Activated CD4-positive, alpha-beta T cell treated with anti-CD3 and anti-CD28 coated beads, Interleukin-2, amount 10 ng/mL, durations not matched to agents 24 days and 14 days (primary cell): ENCODE measurements at regions of chr6 and their contacts with region 1.

Region 1: GRCh38 chr6:143695130-143695968 is 17.6 kb downstream of the PHACTR2 start:
- DNase-seq: no peak
- H3K4me3 Mint-ChIP-seq: no peak overlapping the region
- H3K27ac Mint-ChIP-seq: no peak overlapping the region
- H3K4me1 Mint-ChIP-seq: peaks cover 31% of the 10 kb centered on the region
- H3K27me3 Mint-ChIP-seq: no peaks in the 10 kb centered on the region

Region 2: DNA sequence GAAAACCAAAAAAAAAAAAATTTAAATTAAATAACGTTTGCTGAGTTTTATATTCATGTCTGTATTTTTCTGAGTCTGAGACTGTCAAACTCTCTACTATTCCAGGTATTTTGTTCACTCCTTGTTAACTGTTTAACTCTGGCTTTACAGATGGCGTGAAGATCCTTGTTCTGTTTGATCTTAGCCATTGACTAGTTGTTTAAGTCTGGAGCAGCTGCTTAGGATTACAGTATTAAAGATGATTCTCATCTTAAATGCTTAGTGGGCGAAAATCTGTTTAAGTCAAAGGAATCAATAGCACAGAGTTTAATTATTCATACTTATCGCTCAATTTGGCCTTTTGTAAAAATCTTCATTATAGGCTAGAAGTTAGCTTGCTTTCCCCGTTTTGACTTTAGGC is 15.2 kb before region 1 on chr6:
- intact Hi-C with region 1: no loop called
- DNase-seq: no peak
- H3K4me3 Mint-ChIP-seq: no peak overlapping the region
- H3K27ac Mint-ChIP-seq: no peak overlapping the region
- H3K4me1 Mint-ChIP-seq: peaks cover 17% of the 10 kb centered on the region
- H3K27me3 Mint-ChIP-seq: peaks cover 37% of the 10 kb centered on the region

Region 3: DNA sequence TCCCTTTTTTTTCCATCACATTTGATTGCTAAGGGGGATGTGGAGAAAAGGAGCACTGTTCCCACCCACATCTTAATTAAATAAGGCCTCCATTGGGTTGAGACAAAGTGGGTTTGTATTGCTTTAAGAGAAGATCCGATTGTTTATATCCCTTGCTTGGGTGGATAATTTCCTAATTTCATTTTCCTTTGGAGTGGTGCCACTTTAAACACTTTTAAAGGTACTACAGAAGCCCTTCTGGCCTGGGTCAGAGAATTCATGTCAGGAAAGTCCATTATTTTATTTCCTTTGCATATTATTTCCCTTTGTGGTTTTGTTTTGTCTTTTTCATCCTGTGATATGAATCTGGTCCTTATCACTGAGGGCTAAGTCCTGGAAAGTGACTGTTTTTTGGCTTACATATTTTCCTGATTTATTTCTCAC is 39.3 kb after region 1 on chr6:
- intact Hi-C with region 1: loop called (anchors 5 kb)
- DNase-seq: no peak
- H3K4me3 Mint-ChIP-seq: no peak overlapping the region
- H3K27ac Mint-ChIP-seq: no peak overlapping the region
- H3K4me1 Mint-ChIP-seq: peaks cover 38% of the 10 kb centered on the region
- H3K27me3 Mint-ChIP-seq: no peaks in the 10 kb centered on the region